ENCODE measurements at regions of chr17 and their contacts with region 1.

Region 1: DNA sequence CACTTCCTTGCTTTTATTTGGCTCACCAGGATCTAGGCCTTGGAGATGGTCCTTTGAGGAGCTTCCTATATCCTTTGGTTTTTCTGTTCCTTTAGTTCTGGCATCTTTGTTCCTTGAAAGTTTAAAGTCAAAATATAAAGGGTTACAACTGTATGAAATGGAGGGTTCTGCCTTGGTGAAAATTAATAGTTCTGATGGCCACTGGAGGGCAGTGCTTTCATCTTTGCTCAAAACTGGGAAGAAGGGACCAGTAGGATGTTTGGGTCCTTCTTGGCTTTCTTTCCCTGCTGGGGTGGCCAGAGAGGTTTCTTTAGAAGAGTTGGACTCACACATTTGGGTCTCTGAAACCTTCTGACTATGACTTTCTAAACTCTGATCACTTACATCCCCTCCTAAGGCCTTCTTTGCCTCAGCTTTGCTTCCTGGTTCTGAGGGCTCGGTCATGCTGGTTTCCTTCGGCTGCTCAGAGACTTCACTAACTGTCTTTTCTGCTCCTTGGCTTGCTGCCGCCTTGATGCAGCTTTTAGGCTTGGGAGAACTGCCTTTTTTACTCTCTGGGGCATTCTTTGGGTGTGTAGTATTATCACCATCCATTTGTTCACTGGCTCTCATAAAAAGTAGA is 10.9 kb upstream of the ITGA2B start:
- DNase-seq: peak; percentile 38
- H3K4me3 Mint-ChIP-seq: no peak overlapping the region
- H3K27ac Mint-ChIP-seq: no peak overlapping the region
- H3K4me1 Mint-ChIP-seq: no peaks in the 10 kb centered on the region
- H3K27me3 Mint-ChIP-seq: no peaks in the 10 kb centered on the region
- CTCF ChIP-seq: peak; percentile 39

Region 2: GRCh38 chr17:44266402-44267164 is 133.8 kb before region 1 on chr17:
- CTCF ChIA-PET with region 1: no interaction called
- POLR2A ChIA-PET with region 1: no interaction called
- intact Hi-C with region 1: no loop called
- DNase-seq: peak; percentile 9
- H3K4me3 Mint-ChIP-seq: no peak overlapping the region
- H3K27ac Mint-ChIP-seq: no peak overlapping the region
- H3K4me1 Mint-ChIP-seq: no peaks in the 10 kb centered on the region
- H3K27me3 Mint-ChIP-seq: peaks cover 15% of the 10 kb centered on the region
- CTCF ChIP-seq: no peak

Region 3: DNA sequence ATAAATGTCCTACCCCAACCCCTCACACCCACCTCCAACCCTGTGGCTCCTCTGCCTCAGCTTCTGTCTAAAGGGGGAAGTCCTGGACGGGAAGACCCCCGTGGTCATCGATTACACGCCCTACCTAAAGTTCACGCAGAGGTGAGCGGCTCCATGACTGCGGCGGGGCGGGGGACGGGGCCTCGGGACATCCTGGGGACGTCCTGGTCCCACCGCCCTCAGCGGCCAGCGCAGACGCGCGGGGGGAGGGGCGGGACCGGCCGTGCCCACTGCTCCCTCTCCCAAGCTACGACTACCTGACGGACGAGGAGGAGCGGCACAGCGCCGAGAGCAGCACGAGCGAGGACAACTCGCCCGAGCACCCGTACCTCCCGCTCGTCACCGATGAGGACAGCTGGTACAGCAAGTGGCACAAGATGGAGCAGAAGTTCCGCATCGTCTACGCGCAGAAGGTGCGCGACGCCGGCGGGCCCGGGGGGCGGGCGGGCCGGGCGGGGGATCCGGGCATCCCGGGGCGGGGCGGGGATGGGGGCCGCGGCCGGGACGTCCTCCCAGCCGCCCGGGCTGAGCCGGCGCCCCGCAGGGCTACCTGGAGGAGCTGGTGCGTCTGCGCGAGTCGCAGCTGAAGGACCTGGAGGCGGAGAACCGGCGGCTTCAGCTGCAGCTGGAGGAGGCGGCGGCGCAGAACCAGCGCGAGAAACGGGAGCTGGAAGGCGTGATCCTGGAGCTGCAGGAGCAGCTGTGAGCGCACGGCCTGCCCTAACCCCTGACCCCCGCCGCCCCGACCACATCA is 85.3 kb before region 1 on chr17:
- CTCF ChIA-PET with region 1: no interaction called
- POLR2A ChIA-PET with region 1: no interaction called
- intact Hi-C with region 1: no loop called
- DNase-seq: no peak
- H3K4me3 Mint-ChIP-seq: peak overlapping the region; percentile 64
- H3K27ac Mint-ChIP-seq: no peak overlapping the region
- H3K4me1 Mint-ChIP-seq: peaks cover 9% of the 10 kb centered on the region
- H3K27me3 Mint-ChIP-seq: peaks cover 12% of the 10 kb centered on the region
- CTCF ChIP-seq: no peak

Region 4: GRCh38 chr17:44424828-44425461 is 24.6 kb after region 1 on chr17:
- CTCF ChIA-PET with region 1: no interaction called
- POLR2A ChIA-PET with region 1: no interaction called
- intact Hi-C with region 1: no loop called
- DNase-seq: no peak
- H3K4me3 Mint-ChIP-seq: no peak overlapping the region
- H3K27ac Mint-ChIP-seq: no peak overlapping the region
- H3K4me1 Mint-ChIP-seq: no peaks in the 10 kb centered on the region
- H3K27me3 Mint-ChIP-seq: no peaks in the 10 kb centered on the region
- CTCF ChIP-seq: no peak

Region 5: GRCh38 chr17:44522883-44523671 is 122.7 kb after region 1 on chr17:
- CTCF ChIA-PET with region 1: interaction called, 12 read pairs
- POLR2A ChIA-PET with region 1: no interaction called
- intact Hi-C with region 1: loop called (anchors 1 kb)
- DNase-seq: peak; percentile 76
- H3K4me3 Mint-ChIP-seq: no peak overlapping the region
- H3K27ac Mint-ChIP-seq: no peak overlapping the region
- H3K4me1 Mint-ChIP-seq: peaks cover 2% of the 10 kb centered on the region
- H3K27me3 Mint-ChIP-seq: no peaks in the 10 kb centered on the region
- CTCF ChIP-seq: peak; percentile 57

Region 6: GRCh38 chr17:44636562-44636961 is 236.2 kb after region 1 on chr17:
- CTCF ChIA-PET with region 1: interaction called, 5 read pairs
- POLR2A ChIA-PET with region 1: no interaction called
- intact Hi-C with region 1: loop called (anchors 10 kb)
- DNase-seq: peak; percentile 54
- H3K4me3 Mint-ChIP-seq: no peak overlapping the region
- H3K27ac Mint-ChIP-seq: no peak overlapping the region
- H3K4me1 Mint-ChIP-seq: no peaks in the 10 kb centered on the region
- H3K27me3 Mint-ChIP-seq: no peaks in the 10 kb centered on the region
- CTCF ChIP-seq: peak; percentile 56

Measured in MCF 10A (cell line).